CD8-positive, alpha-beta T cell (primary cell): ENCODE measurements at regions of chr6 and their contacts with region 1.

Region 1: GRCh38 chr6:32127717-32128592 is at the start of gene ATF6B:
- DNase-seq: peak; percentile 90 to 100 (median 95)
- ATAC-seq: peak; percentile 94
- H3K4me3 ChIP-seq: peak within 1 kb of the TSS; percentile 81 to 88
- H3K4me3 Mint-ChIP-seq: peak within 1 kb of the TSS; percentile 99
- H3K27ac ChIP-seq: peak within 1 kb of the TSS; percentile 76 to 83
- H3K27ac Mint-ChIP-seq: peak within 1 kb of the TSS; percentile 97
- H3K4me1 ChIP-seq: peaks cover 31% of the 10 kb centered on the region
- H3K4me1 Mint-ChIP-seq: peaks cover 47% of the 10 kb centered on the region
- H3K27me3 ChIP-seq: no peaks in the 10 kb centered on the region
- H3K27me3 Mint-ChIP-seq: no peaks in the 10 kb centered on the region
- CTCF ChIP-seq: no peak
- total RNA-seq, gene ATF6B: 69.3 to 72.5 TPM

Region 2: GRCh38 chr6:31665501-31666336 is 462.2 kb before region 1 on chr6 and contains the start of gene CSNK2B:
- CTCF ChIA-PET with region 1: no interaction called
- POLR2A ChIA-PET with region 1: no interaction called
- intact Hi-C with region 1: loop called (anchors 1 to 10 kb)
- DNase-seq: peak; percentile 95 to 99 (median 98)
- ATAC-seq: peak; percentile 84
- H3K4me3 ChIP-seq: peak within 1 kb of the TSS; percentile 91 to 94
- H3K4me3 Mint-ChIP-seq: peak within 1 kb of the TSS; percentile 95
- H3K27ac ChIP-seq: peak within 1 kb of the TSS; percentile 96 to 99
- H3K27ac Mint-ChIP-seq: peak within 1 kb of the TSS; percentile 98
- H3K4me1 ChIP-seq: peaks cover 44% of the 10 kb centered on the region
- H3K4me1 Mint-ChIP-seq: peaks cover 56% of the 10 kb centered on the region
- H3K27me3 ChIP-seq: no peaks in the 10 kb centered on the region
- H3K27me3 Mint-ChIP-seq: no peaks in the 10 kb centered on the region
- CTCF ChIP-seq: no peak
- total RNA-seq, gene CSNK2B: 80.9 to 86.1 TPM

Region 3: DNA sequence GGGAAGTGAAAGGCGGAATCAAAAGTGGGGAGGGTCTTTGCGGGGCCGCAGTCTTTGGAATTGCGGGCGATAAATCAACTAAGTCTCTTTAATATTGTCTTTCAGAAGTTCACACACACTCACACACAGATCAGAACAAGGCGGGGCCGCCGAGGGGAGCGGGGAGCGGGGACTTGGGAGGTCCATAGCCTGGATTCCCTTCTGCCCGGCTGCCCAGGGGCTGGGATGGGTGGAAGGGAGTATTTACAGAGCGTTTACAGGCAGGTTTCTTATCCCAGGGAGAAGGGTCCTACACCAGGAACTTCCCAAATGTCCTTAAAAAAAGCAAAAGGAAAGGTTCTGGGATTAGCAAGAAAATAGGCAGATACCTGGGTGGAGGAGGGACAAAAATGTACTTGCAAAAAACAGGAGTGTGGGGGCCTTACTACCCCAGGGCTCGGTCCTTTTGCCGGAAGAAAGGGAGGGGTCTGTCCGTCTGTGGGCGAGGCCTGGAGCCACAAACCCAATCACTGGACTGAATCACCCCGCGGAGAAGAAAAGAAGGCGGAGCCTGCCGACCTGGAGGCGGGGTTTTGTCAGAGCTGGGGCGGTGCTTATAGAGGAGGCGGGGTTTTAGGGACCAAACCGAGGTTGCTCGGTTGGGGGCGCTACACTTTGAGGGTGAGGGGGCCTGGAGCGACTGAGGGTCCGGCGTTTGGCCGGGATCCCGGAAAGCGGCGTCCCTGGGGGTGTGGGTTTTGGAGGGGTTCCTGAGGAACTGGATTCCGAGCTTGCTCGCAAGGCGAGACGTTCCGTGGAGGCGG is 20.5 kb after region 1 on chr6:
- CTCF ChIA-PET with region 1: interaction called, 3 read pairs
- POLR2A ChIA-PET with region 1: interaction called, 7 read pairs
- intact Hi-C with region 1: loop called in 1 of 2 experiments (anchors 1 kb)
- DNase-seq: peak; percentile 38 to 80 (median 69)
- ATAC-seq: peak; percentile 83
- H3K4me3 ChIP-seq: peak overlapping the region in 1 of 2 experiments; percentile 45
- H3K4me3 Mint-ChIP-seq: peak overlapping the region; percentile 84
- H3K27ac ChIP-seq: no peak overlapping the region
- H3K27ac Mint-ChIP-seq: peak overlapping the region; percentile 43
- H3K4me1 ChIP-seq: peaks cover 31% of the 10 kb centered on the region
- H3K4me1 Mint-ChIP-seq: peaks cover 47% of the 10 kb centered on the region
- H3K27me3 ChIP-seq: peaks cover 0 to 9% of the 10 kb centered on the region in 2 experiments
- H3K27me3 Mint-ChIP-seq: peaks cover 19% of the 10 kb centered on the region
- CTCF ChIP-seq: peak; percentile 35

Region 4: DNA sequence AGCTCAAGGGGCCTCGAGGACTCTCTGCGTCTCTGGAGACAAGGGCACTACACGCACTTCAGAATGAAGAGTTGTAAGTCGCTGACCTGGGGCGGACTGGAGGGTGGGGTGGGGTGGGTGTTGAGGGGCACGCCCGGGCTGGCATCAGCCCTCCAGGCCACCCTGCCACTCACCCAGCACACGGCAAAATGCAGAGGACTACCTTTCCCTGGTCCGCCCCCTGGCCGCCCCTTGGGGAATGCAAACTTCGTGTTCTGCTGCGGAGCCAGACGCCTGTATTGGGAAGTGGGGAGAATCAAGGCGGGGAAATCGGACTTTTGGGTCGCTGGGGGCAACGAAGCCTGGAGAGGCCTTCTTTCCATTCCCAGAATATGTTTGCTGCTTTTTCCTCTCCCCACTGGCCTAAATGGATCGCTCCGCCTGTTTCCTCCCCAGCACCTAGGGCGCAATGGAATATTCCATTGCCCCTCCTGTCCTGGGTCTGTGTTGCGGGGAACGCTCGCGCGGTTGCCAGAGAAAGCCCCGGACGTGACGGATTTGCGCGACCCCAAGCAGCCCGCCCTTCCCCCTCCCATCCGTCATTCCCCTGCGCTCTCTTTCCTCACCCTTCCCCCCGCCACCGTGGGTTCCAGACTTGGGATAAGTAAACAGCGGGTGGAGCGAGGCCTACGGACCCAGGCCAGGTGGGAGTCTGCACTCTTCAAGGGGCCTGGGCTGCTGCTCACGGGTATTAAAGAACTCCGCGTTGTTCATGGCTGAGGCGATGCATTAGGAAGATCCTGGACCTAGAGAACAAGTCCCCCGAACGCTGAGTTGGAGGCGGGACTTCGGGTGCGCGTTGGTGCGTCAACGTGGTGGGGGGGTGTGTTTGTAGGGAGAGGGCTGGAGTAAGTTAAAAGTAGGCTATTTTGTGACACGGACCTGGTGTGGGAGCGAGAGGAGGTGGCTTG is 25.9 kb after region 1 on chr6 and contains the start of gene PPT2:
- CTCF ChIA-PET with region 1: interaction called, 3 read pairs
- POLR2A ChIA-PET with region 1: interaction called, 7 read pairs
- intact Hi-C with region 1: loop called (anchors 1 kb)
- DNase-seq: peak; percentile 52 to 95 (median 80)
- ATAC-seq: peak; percentile 74
- H3K4me3 ChIP-seq: peak within 1 kb of the TSS; percentile 84 to 88
- H3K4me3 Mint-ChIP-seq: peak within 1 kb of the TSS; percentile 97
- H3K27ac ChIP-seq: peak within 1 kb of the TSS; percentile 67 to 76
- H3K27ac Mint-ChIP-seq: peak within 1 kb of the TSS; percentile 85
- H3K4me1 ChIP-seq: peaks cover 40% of the 10 kb centered on the region
- H3K4me1 Mint-ChIP-seq: peaks cover 59% of the 10 kb centered on the region
- H3K27me3 ChIP-seq: peaks cover 0 to 5% of the 10 kb centered on the region in 2 experiments
- H3K27me3 Mint-ChIP-seq: peaks cover 8% of the 10 kb centered on the region
- CTCF ChIP-seq: no peak
- total RNA-seq, gene PPT2: 11.1 to 25.5 TPM

Region 5: DNA sequence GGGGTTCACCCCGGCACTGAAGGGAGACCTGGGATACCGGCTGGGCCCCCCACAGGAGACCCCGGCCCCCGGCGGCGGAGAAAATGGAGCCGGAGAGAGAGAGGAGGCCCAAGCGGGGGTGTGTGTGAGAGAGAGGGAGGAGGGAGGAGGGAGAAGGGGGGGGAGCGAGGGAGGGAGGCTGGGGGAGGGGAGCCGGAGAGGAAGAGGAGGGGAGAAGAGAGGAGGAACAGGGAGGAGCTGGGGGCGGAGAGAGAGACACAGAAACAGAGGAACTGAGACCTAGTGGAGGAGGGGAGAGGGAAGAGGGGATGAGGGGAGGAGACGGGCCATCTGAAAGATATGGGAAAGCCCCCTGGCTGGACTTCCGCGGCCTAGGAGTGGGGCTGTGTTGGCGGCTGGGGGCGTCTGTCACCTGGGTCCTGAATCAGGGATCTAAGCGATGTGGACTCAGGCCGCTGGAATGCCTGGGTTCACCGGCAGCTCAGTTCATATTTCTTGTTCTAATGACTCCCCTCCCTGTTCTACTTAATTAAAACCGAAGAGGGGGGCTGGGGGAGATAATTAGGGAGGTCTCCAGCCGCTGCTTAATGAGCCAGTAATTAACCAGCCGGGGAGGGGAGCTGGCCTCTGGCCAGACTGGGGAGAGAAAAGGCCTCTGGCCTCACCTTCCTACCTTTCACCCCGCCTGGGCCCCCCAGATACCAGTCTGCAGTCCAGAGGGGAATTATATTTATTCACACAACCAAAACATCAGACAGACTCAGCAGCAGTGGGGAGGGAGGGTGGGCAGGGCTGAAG is 62.3 kb after region 1 on chr6 and contains the start of gene PBX2:
- CTCF ChIA-PET with region 1: interaction called, 7 read pairs
- POLR2A ChIA-PET with region 1: interaction called, 19 read pairs
- intact Hi-C with region 1: loop called in 1 of 2 experiments (anchors 1 kb)
- DNase-seq: peak; percentile 52 to 93 (median 86)
- ATAC-seq: peak; percentile 52
- H3K4me3 ChIP-seq: peak within 1 kb of the TSS; percentile 78 to 82
- H3K4me3 Mint-ChIP-seq: peak within 1 kb of the TSS; percentile 99
- H3K27ac ChIP-seq: peak within 1 kb of the TSS; percentile 73 to 97
- H3K27ac Mint-ChIP-seq: peak within 1 kb of the TSS; percentile 97
- H3K4me1 ChIP-seq: peaks cover 59% of the 10 kb centered on the region
- H3K4me1 Mint-ChIP-seq: peaks cover 64% of the 10 kb centered on the region
- H3K27me3 ChIP-seq: no peaks in the 10 kb centered on the region
- H3K27me3 Mint-ChIP-seq: no peaks in the 10 kb centered on the region
- CTCF ChIP-seq: no peak
- total RNA-seq, gene PBX2: 53.3 to 54.4 TPM

Region 6: GRCh38 chr6:32843979-32844838 is 716.3 kb after region 1 on chr6 and contains the start of gene PSMB8:
- CTCF ChIA-PET with region 1: no interaction called
- POLR2A ChIA-PET with region 1: interaction called, 4 read pairs
- intact Hi-C with region 1: loop called (anchors 1 to 10 kb)
- DNase-seq: peak; percentile 96 to 99 (median 99)
- ATAC-seq: peak; percentile 75
- H3K4me3 ChIP-seq: peak within 1 kb of the TSS; percentile 99
- H3K4me3 Mint-ChIP-seq: peak within 1 kb of the TSS; percentile 99
- H3K27ac ChIP-seq: peak within 1 kb of the TSS; percentile 96 to 100
- H3K27ac Mint-ChIP-seq: peak within 1 kb of the TSS; percentile 99
- H3K4me1 ChIP-seq: peaks cover 79% of the 10 kb centered on the region
- H3K4me1 Mint-ChIP-seq: peaks cover 83% of the 10 kb centered on the region
- H3K27me3 ChIP-seq: no peaks in the 10 kb centered on the region
- H3K27me3 Mint-ChIP-seq: no peaks in the 10 kb centered on the region
- CTCF ChIP-seq: no peak
- total RNA-seq, gene PSMB8: 108 to 117 TPM

Region 7: DNA sequence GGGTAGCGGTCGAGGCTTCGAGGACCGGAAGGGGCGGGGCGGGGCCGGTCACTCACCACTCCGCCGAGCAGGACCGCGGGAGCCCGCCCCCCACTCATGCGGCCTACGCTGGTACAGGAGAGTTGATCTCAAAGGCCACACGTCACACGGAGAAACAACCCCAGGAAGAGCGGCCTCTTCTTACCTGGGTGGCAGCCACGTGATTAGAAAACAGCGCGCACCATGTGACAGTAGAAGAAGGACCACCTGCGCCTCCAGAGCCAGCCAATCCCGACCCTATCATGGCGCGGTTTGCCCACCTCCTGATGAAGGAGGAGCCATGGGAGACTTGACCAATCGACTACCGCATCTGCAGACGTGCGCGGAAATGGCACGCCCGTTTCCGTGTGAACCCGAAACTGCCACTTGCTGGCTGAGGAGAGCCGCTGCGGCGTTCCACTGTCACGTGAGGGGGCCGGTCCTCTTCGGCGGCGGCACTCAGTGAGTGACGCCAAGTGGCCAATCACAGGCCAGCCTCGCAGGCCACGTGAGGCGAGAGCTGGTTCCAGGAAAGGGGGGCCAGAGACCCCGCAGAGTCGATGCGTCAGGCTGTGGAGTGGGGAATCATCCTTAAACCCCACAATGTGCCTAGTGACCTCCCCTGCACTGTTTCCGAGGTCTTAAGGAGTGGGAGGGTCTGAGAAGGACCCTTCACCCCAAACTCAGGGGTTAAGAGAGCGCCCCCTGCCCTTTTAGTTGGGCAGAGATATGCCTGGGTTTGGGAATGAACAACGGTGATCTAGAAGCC is 1290.1 kb after region 1 on chr6 and contains the start of gene CUTA:
- CTCF ChIA-PET with region 1: no interaction called
- POLR2A ChIA-PET with region 1: no interaction called
- intact Hi-C with region 1: loop called in 1 of 2 experiments (anchors 10 kb)
- DNase-seq: peak; percentile 96 to 100 (median 99)
- ATAC-seq: peak; percentile 87
- H3K4me3 ChIP-seq: peak within 1 kb of the TSS; percentile 68 to 70
- H3K4me3 Mint-ChIP-seq: peak within 1 kb of the TSS; percentile 94
- H3K27ac ChIP-seq: peak within 1 kb of the TSS; percentile 83 to 88
- H3K27ac Mint-ChIP-seq: peak within 1 kb of the TSS; percentile 97
- H3K4me1 ChIP-seq: peaks cover 68% of the 10 kb centered on the region
- H3K4me1 Mint-ChIP-seq: peaks cover 83% of the 10 kb centered on the region
- H3K27me3 ChIP-seq: no peaks in the 10 kb centered on the region
- H3K27me3 Mint-ChIP-seq: no peaks in the 10 kb centered on the region
- CTCF ChIP-seq: peak; percentile 27
- total RNA-seq, gene CUTA: 159 to 177 TPM